ENCODE measurements at regions of chr17 and their contacts with region 1.

Region 1: GRCh38 chr17:27929990-27930389 is 36.8 kb upstream of the LYRM9 start:
- DNase-seq: peak; percentile 65 to 67
- H3K4me3 ChIP-seq: no peak overlapping the region
- H3K4me3 Mint-ChIP-seq: no peak overlapping the region
- H3K27ac Mint-ChIP-seq: peak overlapping the region; percentile 2
- H3K4me1 ChIP-seq: peaks cover 15% of the 10 kb centered on the region
- H3K4me1 Mint-ChIP-seq: peaks cover 9% of the 10 kb centered on the region
- H3K27me3 ChIP-seq: no peaks in the 10 kb centered on the region
- H3K27me3 Mint-ChIP-seq: peaks cover 3% of the 10 kb centered on the region
- CTCF ChIP-seq: no peak

Region 2: DNA sequence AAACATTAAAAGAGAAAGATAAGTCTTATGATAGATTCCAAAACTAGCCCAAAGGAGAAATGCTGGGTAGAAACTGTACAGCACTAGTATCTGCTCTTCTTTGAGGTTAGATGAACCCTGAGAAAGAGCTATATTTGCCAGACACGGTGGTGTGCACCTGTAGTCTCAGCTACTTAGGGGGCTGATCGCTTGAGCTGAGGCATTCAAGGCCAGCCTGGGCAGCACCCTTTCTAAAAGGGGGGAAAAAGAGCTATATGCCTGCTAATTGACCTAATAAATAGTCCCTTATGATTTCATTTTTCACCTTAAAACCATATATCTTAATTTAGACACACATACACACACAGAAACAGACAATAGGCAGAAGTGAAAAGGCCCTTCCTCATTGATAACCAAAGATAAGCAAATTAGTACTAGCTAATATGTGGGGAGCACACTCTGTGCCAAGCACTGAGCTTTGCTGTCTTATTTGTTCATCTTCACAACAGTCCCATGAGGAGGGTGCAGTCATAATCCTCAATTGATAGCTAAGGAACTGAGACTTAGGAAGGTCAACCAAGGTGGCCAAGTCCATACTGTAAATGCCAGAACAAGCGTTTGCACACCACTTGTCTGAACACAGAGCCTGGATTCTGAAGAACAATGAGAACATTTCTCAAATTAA is 55.9 kb after region 1 on chr17:
- CTCF ChIA-PET with region 1: no interaction called
- POLR2A ChIA-PET with region 1: no interaction called
- intact Hi-C with region 1: loop called (anchors 2 kb)
- DNase-seq: no peak
- H3K4me3 ChIP-seq: no peak overlapping the region
- H3K4me3 Mint-ChIP-seq: no peak overlapping the region
- H3K27ac Mint-ChIP-seq: peak overlapping the region; percentile 55
- H3K4me1 ChIP-seq: peaks cover 87% of the 10 kb centered on the region
- H3K4me1 Mint-ChIP-seq: peaks cover 71% of the 10 kb centered on the region
- H3K27me3 ChIP-seq: no peaks in the 10 kb centered on the region
- H3K27me3 Mint-ChIP-seq: no peaks in the 10 kb centered on the region
- CTCF ChIP-seq: no peak